ENCODE measurements at regions of chr1 and their contacts with region 1.

Region 1: GRCh38 chr1:40143891-40144575 is 17.2 kb upstream of the RLF start:
- DNase-seq: peak; percentile 84
- ATAC-seq: peak; percentile 60
- H3K4me3 ChIP-seq: no peak overlapping the region
- H3K4me3 Mint-ChIP-seq: no peak overlapping the region
- H3K27ac ChIP-seq: no peak overlapping the region
- H3K27ac Mint-ChIP-seq: no peak overlapping the region
- H3K4me1 ChIP-seq: peaks cover 3 to 6% of the 10 kb centered on the region in 2 donors
- H3K4me1 Mint-ChIP-seq: peaks cover 7% of the 10 kb centered on the region
- H3K27me3 ChIP-seq: peaks cover 0 to 8% (median 0%) of the 10 kb centered on the region in 4 experiments
- H3K27me3 Mint-ChIP-seq: peaks cover 24% of the 10 kb centered on the region
- CTCF ChIP-seq: peak; percentile 85

Region 2: DNA sequence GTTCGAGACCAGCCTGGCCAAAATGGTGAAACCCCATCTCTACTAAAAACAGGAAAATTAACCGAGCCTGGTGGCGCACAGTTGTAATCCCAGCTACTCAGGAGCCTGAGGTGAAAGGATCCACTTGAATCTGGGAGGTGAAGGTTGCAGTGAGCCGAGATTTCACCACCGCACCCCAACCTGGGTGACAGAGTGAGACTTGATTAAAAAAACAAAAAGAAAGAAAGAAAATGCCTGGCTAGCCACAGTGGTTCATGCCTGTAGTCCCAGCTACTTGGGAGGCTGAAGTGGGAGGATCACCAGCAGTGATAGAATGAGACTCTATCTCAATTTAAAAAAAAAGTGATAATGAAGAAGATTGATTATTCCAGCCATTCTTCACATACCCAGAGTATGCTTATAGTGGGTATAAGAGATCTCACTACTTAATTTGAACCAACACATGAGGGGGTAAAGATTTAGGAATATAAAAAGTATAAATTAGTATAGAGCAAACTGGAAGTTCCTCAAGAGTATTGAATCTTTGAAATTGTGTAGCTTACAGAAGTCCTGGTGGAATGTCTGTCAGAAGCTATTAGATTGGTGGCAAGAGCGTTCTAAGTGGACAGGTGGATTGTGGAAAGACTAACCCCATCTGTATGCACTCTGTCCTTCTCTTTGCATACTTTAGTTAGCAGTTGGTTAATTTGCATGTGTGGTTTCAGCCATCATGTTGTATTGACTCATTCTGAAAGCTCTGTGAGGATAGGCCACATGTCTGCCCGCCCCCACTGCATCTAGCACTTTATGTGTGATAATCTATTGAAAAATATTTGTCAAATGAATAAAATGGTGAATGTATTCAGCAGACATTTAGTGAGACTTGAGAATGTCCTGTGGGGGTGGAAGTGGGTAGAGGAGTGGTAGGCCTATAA is 42.2 kb after region 1 on chr1:
- CTCF ChIA-PET with region 1: interaction called, 15 read pairs
- POLR2A ChIA-PET with region 1: no interaction called
- intact Hi-C with region 1: loop called (anchors 1 kb)
- DNase-seq: peak; percentile 62
- ATAC-seq: peak; percentile 94
- H3K4me3 ChIP-seq: no peak overlapping the region
- H3K4me3 Mint-ChIP-seq: peak overlapping the region; percentile 60
- H3K27ac ChIP-seq: no peak overlapping the region
- H3K27ac Mint-ChIP-seq: no peak overlapping the region
- H3K4me1 ChIP-seq: peaks cover 18 to 20% of the 10 kb centered on the region in 2 donors
- H3K4me1 Mint-ChIP-seq: peaks cover 48% of the 10 kb centered on the region
- H3K27me3 ChIP-seq: no peaks in the 10 kb centered on the region
- H3K27me3 Mint-ChIP-seq: no peaks in the 10 kb centered on the region
- CTCF ChIP-seq: no peak

Region 3: DNA sequence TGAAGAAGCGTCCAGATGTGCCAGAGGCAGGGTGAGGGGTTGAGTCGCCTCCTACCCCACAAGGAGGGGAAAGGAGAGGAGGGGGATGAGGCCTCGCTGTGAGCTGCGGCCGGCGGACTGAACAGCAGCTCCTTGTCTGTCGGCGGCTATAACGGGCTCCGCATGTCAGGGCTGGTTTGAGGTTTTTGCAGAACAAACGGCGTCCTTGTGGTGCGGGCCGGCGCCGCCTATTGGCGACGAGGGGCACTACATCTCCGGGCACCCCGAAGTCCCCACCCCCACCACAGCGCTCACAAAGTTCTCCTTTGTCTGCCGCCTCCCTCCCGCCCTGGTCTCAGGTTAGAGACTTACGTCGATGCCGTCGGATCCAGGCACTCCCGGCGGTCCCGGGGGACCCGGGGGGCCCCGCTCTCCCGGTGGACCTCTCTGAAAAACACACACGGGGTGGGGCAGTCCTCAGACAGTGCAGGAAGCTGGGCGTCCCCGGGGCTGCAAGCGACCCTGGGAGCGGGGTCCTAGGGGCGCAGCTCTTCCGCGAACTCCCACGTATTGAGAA is 171.3 kb after region 1 on chr1:
- CTCF ChIA-PET with region 1: interaction called, 44 read pairs
- POLR2A ChIA-PET with region 1: no interaction called
- intact Hi-C with region 1: no loop called
- DNase-seq: peak; percentile 94
- ATAC-seq: peak; percentile 61
- H3K4me3 ChIP-seq: peak overlapping the region; percentile 43 to 78 (median 66)
- H3K4me3 Mint-ChIP-seq: peak overlapping the region; percentile 92
- H3K27ac ChIP-seq: peak overlapping the region in 1 of 2 donors; percentile 40
- H3K27ac Mint-ChIP-seq: peak overlapping the region; percentile 76
- H3K4me1 ChIP-seq: peaks cover 41 to 59% of the 10 kb centered on the region in 2 donors
- H3K4me1 Mint-ChIP-seq: peaks cover 57% of the 10 kb centered on the region
- H3K27me3 ChIP-seq: peaks cover 0 to 3% (median 1%) of the 10 kb centered on the region in 4 experiments
- H3K27me3 Mint-ChIP-seq: peaks cover 5% of the 10 kb centered on the region
- CTCF ChIP-seq: peak; percentile 95

Region 4: DNA sequence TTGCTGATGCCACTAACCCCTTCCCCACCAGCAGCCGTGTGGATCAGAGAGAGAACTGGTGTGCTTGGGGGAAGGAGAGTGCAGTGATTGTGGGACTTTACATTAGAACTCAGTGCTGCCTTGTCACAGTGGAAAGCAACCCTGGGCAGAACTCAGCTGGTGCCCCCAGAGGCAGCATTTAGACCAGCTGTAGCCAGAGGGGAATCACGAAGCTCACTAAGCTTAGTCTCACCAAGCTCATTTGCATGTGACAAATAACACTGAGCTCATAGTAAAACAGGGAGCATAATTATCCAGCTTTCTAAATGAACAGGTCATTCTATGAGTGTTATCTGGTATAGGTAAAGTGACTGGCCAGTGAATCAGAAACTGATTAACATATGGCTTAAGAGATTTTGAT is 219.7 kb after region 1 on chr1:
- CTCF ChIA-PET with region 1: interaction called, 16 read pairs
- POLR2A ChIA-PET with region 1: no interaction called
- intact Hi-C with region 1: no loop called
- DNase-seq: peak; percentile 78
- ATAC-seq: peak; percentile 100
- H3K4me3 ChIP-seq: no peak overlapping the region
- H3K4me3 Mint-ChIP-seq: peak overlapping the region; percentile 27
- H3K27ac ChIP-seq: peak overlapping the region in 1 of 2 donors; percentile 18
- H3K27ac Mint-ChIP-seq: peak overlapping the region; percentile 74
- H3K4me1 ChIP-seq: peaks cover 12 to 13% of the 10 kb centered on the region in 2 donors
- H3K4me1 Mint-ChIP-seq: peaks cover 13% of the 10 kb centered on the region
- H3K27me3 ChIP-seq: no peaks in the 10 kb centered on the region
- H3K27me3 Mint-ChIP-seq: no peaks in the 10 kb centered on the region
- CTCF ChIP-seq: peak; percentile 54

Region 5: DNA sequence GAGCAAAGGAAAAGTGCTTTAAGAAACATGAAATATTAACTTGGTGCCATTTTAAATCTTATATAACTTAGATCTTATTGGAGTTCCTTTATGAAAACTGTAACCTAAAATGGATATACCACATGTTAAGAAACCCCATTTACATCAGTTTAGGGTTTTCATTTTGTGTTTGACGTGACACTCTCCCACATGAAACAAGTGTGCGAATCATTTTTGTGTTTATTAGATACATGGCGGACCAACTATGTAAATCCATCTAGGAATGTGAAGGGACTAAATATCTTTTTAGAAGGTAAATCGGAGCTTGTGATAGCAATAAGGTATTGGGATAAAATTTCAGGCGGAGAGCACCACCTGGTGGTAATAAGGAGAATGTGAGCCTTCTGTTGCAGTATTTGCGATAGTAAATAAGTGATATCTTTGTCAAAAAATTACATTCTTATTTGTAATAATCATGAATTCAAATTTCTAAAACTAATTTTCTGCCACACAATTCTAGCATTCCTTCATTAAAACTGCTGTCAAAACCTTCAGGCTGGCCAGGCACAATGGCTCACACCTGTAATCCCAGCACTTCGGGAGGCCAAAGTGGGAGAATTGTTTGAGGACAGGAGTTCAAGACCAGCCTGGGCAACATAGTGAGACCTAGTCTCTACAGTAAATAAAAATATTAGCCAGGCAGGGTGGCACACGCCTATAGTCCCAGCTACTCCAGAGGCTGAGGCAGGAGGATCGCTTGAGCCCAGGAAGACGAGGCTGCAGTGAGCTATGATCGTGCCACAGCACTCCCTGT is 260.8 kb after region 1 on chr1:
- CTCF ChIA-PET with region 1: interaction called, 40 read pairs
- POLR2A ChIA-PET with region 1: no interaction called
- intact Hi-C with region 1: loop called (anchors 1 kb)
- DNase-seq: peak; percentile 84
- ATAC-seq: peak; percentile 36
- H3K4me3 ChIP-seq: peak overlapping the region in 1 of 5 experiments; percentile 4
- H3K4me3 Mint-ChIP-seq: peak overlapping the region; percentile 61
- H3K27ac ChIP-seq: peak overlapping the region; percentile 76 to 100
- H3K27ac Mint-ChIP-seq: peak overlapping the region; percentile 92
- H3K4me1 ChIP-seq: peaks cover 54 to 58% of the 10 kb centered on the region in 2 donors
- H3K4me1 Mint-ChIP-seq: peaks cover 62% of the 10 kb centered on the region
- H3K27me3 ChIP-seq: no peaks in the 10 kb centered on the region
- H3K27me3 Mint-ChIP-seq: no peaks in the 10 kb centered on the region
- CTCF ChIP-seq: peak; percentile 88

Region 6: GRCh38 chr1:40438391-40439015 is 294.5 kb after region 1 on chr1:
- CTCF ChIA-PET with region 1: interaction called, 80 read pairs
- POLR2A ChIA-PET with region 1: no interaction called
- intact Hi-C with region 1: loop called (anchors 1 kb)
- DNase-seq: peak; percentile 63
- ATAC-seq: peak; percentile 64
- H3K4me3 ChIP-seq: no peak overlapping the region
- H3K4me3 Mint-ChIP-seq: no peak overlapping the region
- H3K27ac ChIP-seq: no peak overlapping the region
- H3K27ac Mint-ChIP-seq: no peak overlapping the region
- H3K4me1 ChIP-seq: no peaks in the 10 kb centered on the region
- H3K4me1 Mint-ChIP-seq: peaks cover 2% of the 10 kb centered on the region
- H3K27me3 ChIP-seq: no peaks in the 10 kb centered on the region
- H3K27me3 Mint-ChIP-seq: no peaks in the 10 kb centered on the region
- CTCF ChIP-seq: peak; percentile 83

Measured in B cell (primary cell).